HepG2 (cell line): ENCODE measurements at regions of chr6 and their contacts with region 1.

Region 1: DNA sequence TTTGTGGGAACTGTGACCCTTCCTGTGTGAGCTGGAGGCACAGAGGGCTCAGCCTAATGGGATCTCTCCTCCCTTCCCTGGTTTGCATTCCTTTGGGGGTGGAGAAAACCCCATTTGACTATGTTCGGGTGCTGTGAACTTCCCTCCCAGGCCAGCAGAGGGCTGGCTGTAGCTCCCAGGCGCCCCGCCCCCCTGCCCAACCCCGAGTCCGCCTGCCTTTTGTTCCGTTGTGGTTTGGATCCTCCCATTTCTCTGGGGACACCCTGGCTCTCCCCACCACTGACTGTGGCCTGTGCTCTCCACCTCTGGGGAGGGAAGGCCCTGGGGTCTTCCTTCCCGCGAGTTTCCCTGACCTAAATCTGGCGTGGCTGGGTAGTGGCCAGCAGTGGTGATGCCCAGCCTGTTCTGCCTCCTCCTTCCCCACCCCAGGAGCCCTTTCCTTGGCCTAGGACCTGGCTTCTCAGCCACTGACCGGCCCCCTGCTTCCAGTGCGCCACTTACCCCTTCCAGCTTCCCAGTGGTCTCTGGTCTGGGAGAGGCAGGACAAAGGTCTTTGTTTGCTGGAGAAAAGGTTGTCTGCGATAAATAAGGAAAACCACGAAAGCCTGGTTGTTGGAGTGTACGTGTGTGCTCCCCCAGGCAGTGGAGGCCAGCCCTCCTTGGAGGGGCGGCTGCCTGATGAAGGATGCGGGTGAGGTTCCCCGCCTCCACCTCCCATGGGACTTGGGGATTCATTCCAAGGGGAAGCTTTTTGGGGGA is 4.9 kb downstream of the VEGFA start:
- DNase-seq: peak; percentile 62
- ATAC-seq: peak; percentile 20
- H3K4me3 ChIP-seq: peak overlapping the region; percentile 90 to 98 (median 95)
- H3K27ac ChIP-seq: peak overlapping the region; percentile 86
- H3K4me1 ChIP-seq: peaks cover 37% of the 10 kb centered on the region
- H3K27me3 ChIP-seq: no peaks in the 10 kb centered on the region; a peak in 1 of 5 replicates
- CTCF ChIP-seq: peak; percentile 92
- EP300 ChIP-seq: no peak
- POLR2A ChIP-seq: no peak
- RAD21 ChIP-seq: peak; percentile 82

Region 2: DNA sequence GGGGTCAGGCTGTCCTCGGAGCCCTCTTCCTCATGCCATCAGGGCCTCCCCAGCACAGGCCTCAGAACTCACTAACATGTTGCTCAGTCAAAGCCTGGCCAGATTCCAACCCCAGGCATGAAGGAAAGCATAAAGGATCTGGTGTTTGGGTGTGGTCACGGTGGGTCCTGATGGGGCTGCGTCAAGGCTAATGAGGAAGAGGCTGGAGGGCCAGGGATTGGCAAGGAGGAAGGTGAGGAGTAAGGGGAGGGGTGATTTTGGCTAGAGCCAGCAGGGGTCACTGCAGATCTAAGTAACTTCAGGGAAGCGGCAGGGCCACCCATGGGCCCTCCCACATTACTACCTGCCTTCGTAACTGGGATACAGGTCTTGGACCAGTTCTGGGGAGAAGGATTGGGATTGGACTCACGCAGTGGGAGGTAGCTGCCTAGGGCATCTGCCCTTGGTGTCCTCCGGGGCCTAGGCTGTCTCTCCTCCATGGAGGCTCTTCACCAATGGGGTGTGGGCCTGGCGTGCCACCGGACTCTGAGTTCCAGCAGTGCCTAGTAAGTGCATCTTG is 51.1 kb before region 1 on chr6:
- CTCF ChIA-PET with region 1: interaction called, 20 read pairs
- POLR2A ChIA-PET with region 1: interaction called, 31 read pairs
- in situ Hi-C with region 1: no loop called
- intact Hi-C with region 1: loop called (anchors 1 kb)
- DNase-seq: peak; percentile 84
- ATAC-seq: peak; percentile 91
- H3K4me3 ChIP-seq: no peak overlapping the region; a peak in 1 of 6 replicates
- H3K27ac ChIP-seq: no peak overlapping the region
- H3K4me1 ChIP-seq: peaks cover 50% of the 10 kb centered on the region
- H3K27me3 ChIP-seq: peaks cover 0 to 5% of the 10 kb centered on the region in 2 experiments; a peak in 2 of 5 replicates
- CTCF ChIP-seq: peak; percentile 98
- EP300 ChIP-seq: no peak
- POLR2A ChIP-seq: no peak
- RAD21 ChIP-seq: peak; percentile 95

Region 3: DNA sequence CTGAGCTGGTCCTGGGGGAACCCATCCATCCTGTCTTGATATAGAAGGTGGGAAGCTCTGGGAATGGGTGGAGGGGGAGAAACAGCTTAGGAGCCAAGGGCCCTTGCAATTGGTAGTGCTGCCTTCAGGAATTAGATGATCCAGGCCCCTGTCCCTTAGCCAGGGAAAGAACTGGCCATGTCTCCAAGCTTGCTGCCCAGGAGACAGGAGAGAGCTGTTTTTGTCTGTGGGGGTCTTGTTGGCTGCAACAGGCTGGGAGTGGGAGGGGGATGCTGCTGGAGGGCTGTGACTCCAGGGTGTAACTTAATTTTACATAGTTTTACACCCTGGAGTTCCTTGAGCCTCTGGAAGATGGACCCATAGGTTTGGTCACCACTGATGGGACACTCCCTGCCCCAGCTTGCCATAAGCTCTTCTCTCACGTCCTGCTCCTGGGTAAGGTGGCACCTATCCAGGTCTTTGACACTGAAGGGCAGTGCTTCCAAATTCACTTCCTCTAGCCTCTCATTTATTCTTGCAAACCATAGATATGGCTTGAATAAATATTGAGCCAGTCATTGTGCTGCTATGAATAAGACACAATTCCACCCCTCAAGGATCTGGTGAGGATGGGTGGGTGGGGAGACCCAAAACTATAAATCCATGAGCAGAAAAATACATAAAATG is 11.8 kb after region 1 on chr6:
- CTCF ChIA-PET with region 1: no interaction called
- POLR2A ChIA-PET with region 1: interaction called, 12 read pairs
- in situ Hi-C with region 1: no loop called
- intact Hi-C with region 1: no loop called
- DNase-seq: no peak
- ATAC-seq: peak; percentile 12
- H3K4me3 ChIP-seq: no peak overlapping the region
- H3K27ac ChIP-seq: no peak overlapping the region
- H3K4me1 ChIP-seq: no peaks in the 10 kb centered on the region
- H3K27me3 ChIP-seq: peaks cover 0 to 5% of the 10 kb centered on the region in 2 experiments; a peak in 3 of 5 replicates
- CTCF ChIP-seq: no peak
- EP300 ChIP-seq: no peak
- POLR2A ChIP-seq: peak in 1 of 2 experiments; percentile 52; a peak in 1 of 4 replicates
- RAD21 ChIP-seq: no peak

Region 4: DNA sequence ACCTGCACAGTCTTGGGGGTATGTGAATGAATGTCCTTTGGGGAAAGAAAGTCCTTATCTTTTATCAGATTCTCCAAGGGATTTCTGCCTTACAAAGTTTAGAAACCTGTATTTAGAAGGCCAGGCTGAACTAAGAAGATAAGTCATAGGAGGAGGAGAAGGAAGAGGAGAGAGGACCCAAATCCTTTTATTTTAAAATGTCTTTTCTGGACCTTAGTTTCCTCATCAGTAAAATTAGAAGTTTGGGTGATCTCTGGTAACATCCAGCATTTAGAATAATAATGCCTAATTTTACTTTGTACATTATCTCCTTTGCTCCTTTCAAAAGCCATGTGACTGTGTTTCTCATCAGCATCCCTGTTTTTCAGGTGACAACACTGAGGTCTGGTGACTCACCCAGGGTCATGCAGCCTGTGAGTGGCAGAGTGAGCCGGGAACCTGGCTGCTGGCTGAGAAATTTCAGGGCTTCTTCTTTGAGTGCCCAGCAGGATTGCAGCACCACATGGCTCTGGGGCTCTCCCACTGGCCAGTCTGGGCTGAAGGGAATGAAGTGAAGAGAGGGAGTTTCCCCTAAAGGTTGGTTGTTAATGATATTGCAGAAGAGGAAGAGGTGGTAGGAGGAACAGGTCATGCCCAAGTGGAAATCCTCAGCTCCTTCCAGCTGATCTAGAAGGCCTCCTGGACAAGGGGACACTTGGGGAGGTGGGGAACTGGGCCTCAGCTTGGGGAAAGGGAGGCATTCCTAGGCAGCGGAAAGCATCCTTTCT is 29.0 kb after region 1 on chr6:
- CTCF ChIA-PET with region 1: interaction called, 3 read pairs
- POLR2A ChIA-PET with region 1: interaction called, 66 read pairs
- in situ Hi-C with region 1: loop called (anchors 5 kb)
- intact Hi-C with region 1: no loop called
- DNase-seq: peak; percentile 56
- ATAC-seq: no peak
- H3K4me3 ChIP-seq: peak overlapping the region in 2 of 3 experiments; percentile 3 to 78; a peak in 3 of 6 replicates
- H3K27ac ChIP-seq: peak overlapping the region; percentile 79
- H3K4me1 ChIP-seq: peaks cover 95% of the 10 kb centered on the region
- H3K27me3 ChIP-seq: no peaks in the 10 kb centered on the region; a peak in 1 of 5 replicates
- CTCF ChIP-seq: no peak
- EP300 ChIP-seq: no peak
- POLR2A ChIP-seq: no peak
- RAD21 ChIP-seq: no peak

Region 5: GRCh38 chr6:43817192-43817591 is 42.2 kb after region 1 on chr6:
- CTCF ChIA-PET with region 1: interaction called, 19 read pairs
- POLR2A ChIA-PET with region 1: interaction called, 12 read pairs
- in situ Hi-C with region 1: no loop called
- intact Hi-C with region 1: loop called (anchors 1 kb)
- DNase-seq: peak; percentile 72
- ATAC-seq: peak; percentile 99
- H3K4me3 ChIP-seq: no peak overlapping the region
- H3K27ac ChIP-seq: no peak overlapping the region
- H3K4me1 ChIP-seq: peaks cover 46% of the 10 kb centered on the region
- H3K27me3 ChIP-seq: peaks cover 0 to 3% of the 10 kb centered on the region in 2 experiments; a peak in 2 of 5 replicates
- CTCF ChIP-seq: peak; percentile 92
- EP300 ChIP-seq: no peak
- POLR2A ChIP-seq: no peak
- RAD21 ChIP-seq: peak; percentile 86

Region 6: GRCh38 chr6:43838276-43839036 is 63.5 kb after region 1 on chr6:
- CTCF ChIA-PET with region 1: interaction called, 4 read pairs
- POLR2A ChIA-PET with region 1: interaction called, 14 read pairs
- in situ Hi-C with region 1: no loop called
- intact Hi-C with region 1: loop called (anchors 1 kb)
- DNase-seq: peak; percentile 41
- ATAC-seq: peak; percentile 63
- H3K4me3 ChIP-seq: peak overlapping the region in 1 of 3 experiments; percentile 34; a peak in 1 of 6 replicates
- H3K27ac ChIP-seq: no peak overlapping the region
- H3K4me1 ChIP-seq: peaks cover 69% of the 10 kb centered on the region
- H3K27me3 ChIP-seq: peaks cover 9 to 46% of the 10 kb centered on the region in 2 experiments
- CTCF ChIP-seq: peak; percentile 74
- EP300 ChIP-seq: 0 out of 4 replicates have a peak, but pooled peaks of 1 of the 2 experiments have one; percentile 2
- POLR2A ChIP-seq: no peak
- RAD21 ChIP-seq: peak; percentile 75

Region 7: DNA sequence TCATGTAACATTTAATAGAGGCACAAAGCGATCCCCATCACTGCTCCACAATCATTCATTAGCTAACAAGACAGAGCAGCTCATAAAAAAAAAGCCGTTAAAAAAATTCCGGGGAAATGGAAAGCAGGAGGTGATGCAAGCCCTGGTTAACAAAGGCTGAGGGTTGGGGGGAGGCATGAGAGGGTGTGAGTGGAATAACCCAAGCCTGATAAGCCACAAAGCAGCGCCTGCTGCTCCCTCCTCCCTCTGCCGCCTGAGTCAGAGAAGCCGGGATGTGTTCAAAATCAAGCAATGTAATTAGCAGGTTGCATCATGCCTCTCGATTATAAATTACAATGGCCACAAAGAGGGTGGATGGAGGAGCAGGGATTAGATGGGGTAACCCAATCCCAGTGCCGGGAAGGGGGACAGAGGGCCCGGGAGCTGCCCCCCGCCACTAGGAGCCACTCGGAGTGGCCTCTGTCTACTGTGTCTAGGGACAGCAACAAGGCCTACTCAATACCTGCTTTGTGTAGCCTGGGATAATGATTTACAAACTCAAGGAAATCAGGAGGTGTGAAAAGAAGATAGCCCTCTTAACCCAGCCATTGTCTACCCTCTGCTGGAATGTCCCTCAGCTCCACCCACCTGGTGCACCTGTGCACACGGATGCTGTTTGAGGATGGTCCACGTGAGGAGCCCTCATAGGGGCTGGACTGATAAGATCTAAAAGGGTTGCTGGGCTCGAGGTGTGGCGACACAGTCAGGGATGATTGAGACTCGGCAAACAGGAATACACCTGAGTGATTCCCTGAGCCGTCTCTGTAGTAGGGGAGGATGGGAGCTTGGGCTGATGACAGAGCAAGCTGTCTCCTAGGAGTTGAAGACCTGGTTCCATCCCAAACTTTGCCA is 151.9 kb after region 1 on chr6:
- CTCF ChIA-PET with region 1: no interaction called
- POLR2A ChIA-PET with region 1: interaction called, 16 read pairs
- in situ Hi-C with region 1: no loop called
- intact Hi-C with region 1: no loop called
- DNase-seq: peak; percentile 90
- ATAC-seq: peak; percentile 90
- H3K4me3 ChIP-seq: peak overlapping the region in 2 of 3 experiments; percentile 12 to 35; a peak in 2 of 6 replicates
- H3K27ac ChIP-seq: peak overlapping the region; percentile 69
- H3K4me1 ChIP-seq: peaks cover 74% of the 10 kb centered on the region
- H3K27me3 ChIP-seq: peaks cover 0 to 2% of the 10 kb centered on the region in 2 experiments; a peak in 1 of 5 replicates
- CTCF ChIP-seq: no peak; the same call in none of the 2 replicates
- EP300 ChIP-seq: peak in 1 of 2 experiments; percentile 93; a peak in 2 of 4 replicates
- POLR2A ChIP-seq: peak; percentile 31 to 44; a peak in 2 of 4 replicates
- RAD21 ChIP-seq: peak; percentile 35; the same call in 1 of the 2 replicates